B cell (primary cell): ENCODE measurements at regions of chr3 and their contacts with region 1.

Region 1: DNA sequence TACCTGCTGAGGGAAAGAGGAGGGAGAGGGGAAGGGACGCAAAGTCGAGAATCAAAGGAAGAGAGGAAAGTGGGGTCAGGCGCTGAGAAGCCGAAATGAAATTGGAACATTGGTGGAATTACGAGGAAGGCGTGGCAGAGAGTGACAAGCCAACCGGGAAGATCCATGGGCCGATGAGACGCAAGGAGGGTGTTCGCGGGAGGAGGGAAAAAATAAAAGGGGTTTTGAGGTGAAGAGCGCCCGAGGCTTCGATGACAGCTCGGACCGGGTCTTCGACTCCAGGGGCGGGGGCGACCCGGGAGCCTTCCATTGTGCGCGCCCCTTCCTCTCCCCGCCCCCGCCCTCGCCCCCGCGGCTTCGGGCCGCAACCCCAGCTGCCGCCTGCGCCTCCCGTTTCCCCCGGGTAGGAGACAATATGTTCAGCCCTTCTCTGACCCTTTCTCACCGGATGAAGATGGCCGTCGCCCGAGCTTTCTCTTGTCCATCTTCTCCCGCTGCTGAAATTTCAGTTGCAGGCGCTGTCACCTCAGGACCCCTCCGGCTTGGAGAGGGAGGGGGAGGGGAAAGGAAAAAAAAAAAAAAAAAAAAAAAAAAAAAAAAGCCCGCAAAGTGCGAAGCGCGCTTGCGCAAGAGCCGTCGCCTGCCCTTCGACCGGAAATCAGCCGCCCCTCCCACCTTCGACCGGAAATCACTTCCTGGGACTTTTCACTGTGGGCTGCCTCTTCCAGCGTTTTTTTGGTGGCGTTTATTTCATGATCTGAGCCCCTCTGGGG is at the start of gene SENP7:
- DNase-seq: peak; percentile 89
- ATAC-seq: peak; percentile 72
- H3K4me3 ChIP-seq: peak within 1 kb of the TSS; percentile 67 to 97 (median 86)
- H3K4me3 Mint-ChIP-seq: peak within 1 kb of the TSS; percentile 100
- H3K27ac ChIP-seq: peak within 1 kb of the TSS; percentile 91 to 95
- H3K27ac Mint-ChIP-seq: peak within 1 kb of the TSS; percentile 99
- H3K4me1 ChIP-seq: peaks cover 11 to 12% of the 10 kb centered on the region in 2 donors
- H3K4me1 Mint-ChIP-seq: peaks cover 46% of the 10 kb centered on the region
- H3K27me3 ChIP-seq: peaks cover 0 to 5% (median 0%) of the 10 kb centered on the region in 4 experiments
- H3K27me3 Mint-ChIP-seq: peaks cover 11% of the 10 kb centered on the region
- CTCF ChIP-seq: no peak
- total RNA-seq, gene SENP7: 47.5 and 50.3 TPM in 2 replicates

Region 2: GRCh38 chr3:101676765-101677435 is 164.1 kb after region 1 on chr3 and contains the start of gene ZBTB11:
- CTCF ChIA-PET with region 1: no interaction called
- POLR2A ChIA-PET with region 1: no interaction called
- intact Hi-C with region 1: loop called (anchors 1 kb)
- DNase-seq: peak; percentile 99
- ATAC-seq: peak; percentile 65
- H3K4me3 ChIP-seq: peak within 1 kb of the TSS; percentile 73 to 99 (median 94)
- H3K4me3 Mint-ChIP-seq: peak within 1 kb of the TSS; percentile 94
- H3K27ac ChIP-seq: peak within 1 kb of the TSS; percentile 96 to 98
- H3K27ac Mint-ChIP-seq: peak within 1 kb of the TSS; percentile 97
- H3K4me1 ChIP-seq: peaks cover 17 to 21% of the 10 kb centered on the region in 2 donors
- H3K4me1 Mint-ChIP-seq: peaks cover 40% of the 10 kb centered on the region
- H3K27me3 ChIP-seq: no peaks in the 10 kb centered on the region
- H3K27me3 Mint-ChIP-seq: no peaks in the 10 kb centered on the region
- CTCF ChIP-seq: no peak
- total RNA-seq, gene ZBTB11: 40.7 and 42.6 TPM in 2 replicates